ENCODE measurements at regions of chr18 and their contacts with region 1.

Region 1: DNA sequence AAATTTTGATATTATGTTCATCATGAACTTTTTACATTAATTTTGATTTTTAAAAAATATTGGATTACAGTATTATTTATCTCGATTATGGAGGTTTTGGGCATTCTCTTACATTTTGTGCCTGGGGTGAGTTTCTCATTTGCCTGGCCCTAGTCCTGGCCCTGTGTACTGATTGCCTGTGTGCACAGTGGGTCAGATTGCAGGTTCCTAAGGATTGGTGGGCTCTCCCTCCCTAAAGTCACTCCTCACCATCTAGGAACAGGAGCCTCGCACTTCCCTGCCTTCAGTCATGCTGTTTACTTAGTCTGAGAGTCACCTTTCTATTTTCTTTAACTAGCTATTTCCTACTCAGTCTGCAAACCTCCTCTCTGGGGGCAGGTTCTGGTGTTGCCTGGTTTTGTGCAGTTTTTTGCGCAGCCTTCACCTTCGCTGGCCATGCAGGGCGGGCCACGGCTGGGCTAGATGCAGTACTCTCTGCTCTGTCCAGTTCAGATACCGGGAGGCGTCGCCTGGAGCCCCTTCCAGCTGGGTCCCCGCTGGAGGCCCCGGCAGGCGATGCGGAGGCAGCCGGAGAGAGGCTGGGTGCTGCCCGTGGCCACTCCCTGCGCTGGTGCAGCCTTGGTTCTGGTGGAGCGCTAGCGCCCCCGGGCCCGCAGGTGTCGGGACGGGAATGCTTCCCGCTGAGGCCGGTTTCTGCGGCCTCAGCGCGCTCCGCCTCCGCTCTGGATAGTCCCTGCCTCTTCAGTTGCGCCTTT is 23.3 kb upstream of the MC5R start:
- DNase-seq: peak; percentile 61
- H3K4me3 ChIP-seq: peak overlapping the region in 1 of 3 experiments; percentile 37
- H3K27ac ChIP-seq: no peak overlapping the region
- H3K4me1 ChIP-seq: peaks cover 24% of the 10 kb centered on the region
- H3K27me3 ChIP-seq: peaks cover 3 to 10% of the 10 kb centered on the region in 2 experiments
- CTCF ChIP-seq: peak; percentile 57 to 78
- POLR2A ChIP-seq: no peak

Region 2: DNA sequence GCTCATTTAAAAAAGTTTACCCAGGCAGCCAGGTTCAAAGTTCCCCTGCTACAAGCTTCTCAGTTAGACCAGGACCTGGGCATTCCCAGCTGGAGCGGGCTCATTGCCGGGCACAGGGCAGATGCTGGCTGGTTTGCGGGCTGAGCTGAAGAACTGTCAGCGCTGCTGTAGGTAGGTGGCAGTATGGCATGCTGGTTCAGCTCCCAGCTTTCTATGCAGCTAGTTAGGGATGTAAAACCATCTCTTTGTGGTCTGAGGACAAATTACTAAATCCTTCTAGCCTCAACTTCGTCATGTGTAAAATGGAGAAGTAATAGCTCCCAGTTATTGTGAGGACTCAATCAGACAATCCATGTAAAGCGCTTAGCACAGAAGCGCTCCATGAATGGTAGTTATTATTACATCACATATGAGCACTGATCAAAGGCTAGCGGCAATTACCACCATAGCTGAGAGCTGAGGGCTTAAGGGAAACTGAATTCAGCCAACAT is 584.5 kb before region 1 on chr18:
- CTCF ChIA-PET with region 1: interaction called, 7 read pairs
- POLR2A ChIA-PET with region 1: no interaction called
- dilution Hi-C with region 1: no loop called
- intact Hi-C with region 1: loop called (anchors 5 kb)
- DNase-seq: peak; percentile 81
- H3K4me3 ChIP-seq: no peak overlapping the region
- H3K27ac ChIP-seq: no peak overlapping the region
- H3K4me1 ChIP-seq: peaks cover 6% of the 10 kb centered on the region
- H3K27me3 ChIP-seq: peaks cover 28 to 62% of the 10 kb centered on the region in 2 experiments
- CTCF ChIP-seq: peak; percentile 66 to 80
- POLR2A ChIP-seq: no peak

Region 3: GRCh38 chr18:13302457-13303225 is 498.0 kb before region 1 on chr18:
- CTCF ChIA-PET with region 1: no interaction called
- POLR2A ChIA-PET with region 1: no interaction called
- dilution Hi-C with region 1: no loop called
- intact Hi-C with region 1: no loop called
- DNase-seq: peak; percentile 27
- H3K4me3 ChIP-seq: no peak overlapping the region
- H3K27ac ChIP-seq: no peak overlapping the region
- H3K4me1 ChIP-seq: no peaks in the 10 kb centered on the region
- H3K27me3 ChIP-seq: peaks cover 0 to 1% of the 10 kb centered on the region in 2 experiments
- CTCF ChIP-seq: no peak
- POLR2A ChIP-seq: no peak

Region 4: GRCh38 chr18:13435596-13436327 is 364.9 kb before region 1 on chr18:
- CTCF ChIA-PET with region 1: no interaction called
- POLR2A ChIA-PET with region 1: no interaction called
- dilution Hi-C with region 1: no loop called
- intact Hi-C with region 1: loop called (anchors 1 kb)
- DNase-seq: peak; percentile 91
- H3K4me3 ChIP-seq: no peak overlapping the region
- H3K27ac ChIP-seq: peak overlapping the region; percentile 90
- H3K4me1 ChIP-seq: peaks cover 35% of the 10 kb centered on the region
- H3K27me3 ChIP-seq: no peaks in the 10 kb centered on the region
- CTCF ChIP-seq: no peak
- POLR2A ChIP-seq: no peak

Region 5: GRCh38 chr18:13500227-13500865 is 300.3 kb before region 1 on chr18:
- CTCF ChIA-PET with region 1: no interaction called
- POLR2A ChIA-PET with region 1: no interaction called
- dilution Hi-C with region 1: no loop called
- intact Hi-C with region 1: loop called (anchors 2 kb)
- DNase-seq: peak; percentile 83
- H3K4me3 ChIP-seq: no peak overlapping the region
- H3K27ac ChIP-seq: peak overlapping the region; percentile 57
- H3K4me1 ChIP-seq: peaks cover 29% of the 10 kb centered on the region
- H3K27me3 ChIP-seq: peaks cover 0 to 2% of the 10 kb centered on the region in 2 experiments
- CTCF ChIP-seq: no peak
- POLR2A ChIP-seq: no peak

Region 6: GRCh38 chr18:13611601-13612195 is 189.0 kb before region 1 on chr18:
- CTCF ChIA-PET with region 1: interaction called, 3 read pairs
- POLR2A ChIA-PET with region 1: no interaction called
- dilution Hi-C with region 1: no loop called
- intact Hi-C with region 1: loop called (anchors 1 kb)
- DNase-seq: peak; percentile 24
- H3K4me3 ChIP-seq: peak overlapping the region in 1 of 3 experiments; percentile 27
- H3K27ac ChIP-seq: no peak overlapping the region
- H3K4me1 ChIP-seq: peaks cover 13% of the 10 kb centered on the region
- H3K27me3 ChIP-seq: peaks cover 15 to 16% of the 10 kb centered on the region in 2 experiments
- CTCF ChIP-seq: no peak
- POLR2A ChIP-seq: no peak

Region 7: DNA sequence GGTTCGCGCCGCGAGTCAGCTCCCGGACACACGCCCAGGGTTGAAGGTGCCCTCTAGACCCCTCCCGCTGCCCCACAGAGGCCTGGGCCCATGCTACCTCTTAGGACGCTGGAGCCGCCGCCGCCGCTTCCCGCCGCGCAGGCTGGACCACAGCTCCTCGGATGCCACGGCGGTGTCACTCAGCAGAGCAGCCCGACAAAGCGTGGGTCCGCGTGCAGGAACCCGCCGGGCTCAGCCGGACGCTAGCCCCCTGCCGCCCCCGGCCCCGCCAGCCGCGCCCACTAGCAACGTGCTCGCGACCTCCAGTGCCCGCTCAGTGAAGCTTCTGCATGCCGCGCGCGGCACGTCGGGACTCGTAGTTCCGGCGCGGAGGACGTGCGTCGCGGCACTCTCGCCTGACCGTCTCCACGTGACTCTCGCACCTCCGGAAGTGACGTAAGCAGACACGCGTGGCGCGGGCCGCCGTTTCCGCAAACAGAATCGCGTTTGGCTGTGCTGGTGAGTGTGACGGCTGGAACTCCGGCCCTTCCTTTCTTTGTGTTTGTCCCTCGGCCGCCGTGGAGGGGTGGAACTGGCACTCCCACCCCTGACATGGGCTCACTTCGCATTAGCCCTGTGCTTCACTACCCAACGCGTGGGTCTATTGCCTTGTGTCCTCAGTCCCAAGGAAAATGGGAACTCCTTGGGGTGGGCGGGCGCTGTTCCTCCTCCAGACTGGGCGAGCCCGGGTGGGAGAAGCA is 74.3 kb before region 1 on chr18 and contains the starts of genes FAM210A and RNMT:
- CTCF ChIA-PET with region 1: interaction called, 4 read pairs
- POLR2A ChIA-PET with region 1: no interaction called
- dilution Hi-C with region 1: no loop called
- intact Hi-C with region 1: loop called (anchors 1 kb)
- DNase-seq: peak; percentile 97
- H3K4me3 ChIP-seq: peak within 1 kb of the TSS; percentile 78 to 98 (median 94)
- H3K27ac ChIP-seq: peak within 1 kb of the TSS; percentile 87
- H3K4me1 ChIP-seq: peaks cover 19% of the 10 kb centered on the region
- H3K27me3 ChIP-seq: no peaks in the 10 kb centered on the region
- CTCF ChIP-seq: no peak
- POLR2A ChIP-seq: peak; percentile 79
- total RNA-seq, gene FAM210A: 14.6 and 17.3 TPM in 2 replicates
- total RNA-seq, gene RNMT: 24.4 and 29.5 TPM in 2 replicates

Region 8: DNA sequence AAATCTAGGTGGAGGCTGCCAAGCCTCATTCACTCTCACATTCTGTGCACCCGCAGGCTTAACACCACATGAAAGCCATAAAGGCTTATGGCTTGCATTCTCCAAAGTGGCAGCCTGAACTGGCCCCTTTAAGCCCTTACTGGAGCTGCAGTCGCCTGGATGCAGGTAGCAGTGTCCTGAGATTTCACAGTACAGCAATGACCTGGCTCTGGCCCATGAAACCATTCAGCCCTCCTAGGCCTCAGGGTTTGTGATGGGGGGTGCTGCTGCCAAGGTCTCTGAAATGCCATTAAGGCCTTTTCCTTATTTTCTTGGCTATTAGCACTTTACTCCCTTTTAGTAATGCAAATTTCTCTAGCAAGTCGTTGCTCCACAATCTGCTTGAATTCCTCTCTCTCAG is 25.6 kb before region 1 on chr18:
- CTCF ChIA-PET with region 1: no interaction called
- POLR2A ChIA-PET with region 1: no interaction called
- dilution Hi-C with region 1: no loop called
- intact Hi-C with region 1: no loop called
- DNase-seq: no peak
- H3K4me3 ChIP-seq: no peak overlapping the region
- H3K27ac ChIP-seq: no peak overlapping the region
- H3K4me1 ChIP-seq: no peaks in the 10 kb centered on the region
- H3K27me3 ChIP-seq: no peaks in the 10 kb centered on the region
- CTCF ChIP-seq: no peak
- POLR2A ChIP-seq: no peak

Measured in endothelial cell of umbilical vein (primary cell).